ENCODE measurements at regions of chr6 and their contacts with region 1.

Region 1: DNA sequence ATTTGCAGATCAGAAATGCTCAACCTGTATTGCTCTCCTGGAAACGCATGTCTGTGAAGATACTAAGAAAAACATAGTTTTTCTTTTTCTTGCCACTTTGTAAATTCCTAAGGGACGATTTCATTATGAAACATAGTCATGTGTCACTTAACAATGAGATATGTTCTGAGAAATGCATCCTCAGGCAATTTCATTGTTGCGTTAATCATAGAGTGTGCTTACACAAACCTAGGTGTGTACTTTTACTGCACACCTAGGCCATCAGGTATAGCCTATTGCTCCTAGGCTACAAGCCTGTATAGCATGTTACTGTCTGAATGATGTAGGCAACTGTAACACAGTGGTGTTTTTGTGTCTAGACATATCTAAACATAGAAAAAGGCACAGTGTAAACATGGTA is 13.4 kb upstream of the THEMIS start:
- DNase-seq: no peak
- H3K4me3 ChIP-seq: no peak overlapping the region
- H3K27ac ChIP-seq: no peak overlapping the region
- H3K4me1 ChIP-seq: no peaks in the 10 kb centered on the region
- H3K27me3 ChIP-seq: no peaks in the 10 kb centered on the region
- CTCF ChIP-seq: no peak
- EP300 ChIP-seq: no peak
- POLR2A ChIP-seq: no peak

Region 2: GRCh38 chr6:127784468-127784867 is 129.8 kb before region 1 on chr6:
- intact Hi-C with region 1: loop called in 1 of 4 experiments (anchors 5 kb)
- DNase-seq: no peak
- H3K4me3 ChIP-seq: no peak overlapping the region
- H3K27ac ChIP-seq: no peak overlapping the region
- H3K4me1 ChIP-seq: no peaks in the 10 kb centered on the region
- H3K27me3 ChIP-seq: no peaks in the 10 kb centered on the region
- CTCF ChIP-seq: no peak
- EP300 ChIP-seq: no peak
- POLR2A ChIP-seq: no peak

Measured in ovary (tissue), 10 donors.